ENCODE measurements at regions of chr2 and their contacts with region 1.

Region 1: GRCh38 chr2:195656859-195657633 is at the start of gene SLC39A10:
- DNase-seq: peak; percentile 95
- ATAC-seq: peak; percentile 93
- H3K4me3 ChIP-seq: peak within 1 kb of the TSS; percentile 66 to 80
- H3K27ac ChIP-seq: peak within 1 kb of the TSS; percentile 87
- H3K4me1 ChIP-seq: peaks cover 11 to 17% of the 10 kb centered on the region in 2 experiments; a peak in 3 of 4 replicates
- H3K27me3 ChIP-seq: no peaks in the 10 kb centered on the region
- CTCF ChIP-seq: no peak
- POLR2A ChIP-seq: peak; percentile 87
- RAD21 ChIP-seq: no peak
- total RNA-seq, gene SLC39A10: 59.0 TPM

Region 2: GRCh38 chr2:195410074-195410671 is 246.9 kb before region 1 on chr2:
- CTCF ChIA-PET with region 1: interaction called, 3 read pairs
- POLR2A ChIA-PET with region 1: no interaction called
- RAD21 ChIA-PET with region 1: no interaction called
- intact Hi-C with region 1: loop called (anchors 5 kb)
- DNase-seq: no peak
- ATAC-seq: no peak
- H3K4me3 ChIP-seq: no peak overlapping the region
- H3K27ac ChIP-seq: no peak overlapping the region
- H3K4me1 ChIP-seq: no peaks in the 10 kb centered on the region
- H3K27me3 ChIP-seq: no peaks in the 10 kb centered on the region
- CTCF ChIP-seq: no peak
- POLR2A ChIP-seq: no peak
- RAD21 ChIP-seq: no peak

Region 3: DNA sequence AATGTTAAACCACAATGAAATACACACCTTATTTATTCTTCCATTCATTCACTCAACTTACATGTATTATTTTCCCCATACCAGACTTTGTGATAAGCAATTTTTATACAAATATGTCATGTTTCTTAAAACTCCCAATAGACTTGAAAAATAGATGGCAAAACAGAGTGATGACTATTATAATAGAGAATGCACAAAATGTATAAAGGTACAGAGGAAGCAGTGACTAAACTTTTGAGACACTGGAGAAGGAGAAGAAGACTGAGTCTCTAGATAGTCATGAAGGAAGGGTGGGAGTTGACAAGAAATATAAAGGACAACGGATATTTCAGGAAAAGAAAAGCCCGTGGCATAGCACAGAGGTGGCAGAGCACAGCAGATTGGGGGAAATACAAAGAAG is 198.1 kb before region 1 on chr2:
- CTCF ChIA-PET with region 1: no interaction called
- POLR2A ChIA-PET with region 1: no interaction called
- RAD21 ChIA-PET with region 1: no interaction called
- intact Hi-C with region 1: no loop called
- DNase-seq: no peak
- ATAC-seq: no peak
- H3K4me3 ChIP-seq: no peak overlapping the region
- H3K27ac ChIP-seq: no peak overlapping the region
- H3K4me1 ChIP-seq: no peaks in the 10 kb centered on the region
- H3K27me3 ChIP-seq: no peaks in the 10 kb centered on the region
- CTCF ChIP-seq: no peak
- POLR2A ChIP-seq: no peak
- RAD21 ChIP-seq: no peak

Region 4: DNA sequence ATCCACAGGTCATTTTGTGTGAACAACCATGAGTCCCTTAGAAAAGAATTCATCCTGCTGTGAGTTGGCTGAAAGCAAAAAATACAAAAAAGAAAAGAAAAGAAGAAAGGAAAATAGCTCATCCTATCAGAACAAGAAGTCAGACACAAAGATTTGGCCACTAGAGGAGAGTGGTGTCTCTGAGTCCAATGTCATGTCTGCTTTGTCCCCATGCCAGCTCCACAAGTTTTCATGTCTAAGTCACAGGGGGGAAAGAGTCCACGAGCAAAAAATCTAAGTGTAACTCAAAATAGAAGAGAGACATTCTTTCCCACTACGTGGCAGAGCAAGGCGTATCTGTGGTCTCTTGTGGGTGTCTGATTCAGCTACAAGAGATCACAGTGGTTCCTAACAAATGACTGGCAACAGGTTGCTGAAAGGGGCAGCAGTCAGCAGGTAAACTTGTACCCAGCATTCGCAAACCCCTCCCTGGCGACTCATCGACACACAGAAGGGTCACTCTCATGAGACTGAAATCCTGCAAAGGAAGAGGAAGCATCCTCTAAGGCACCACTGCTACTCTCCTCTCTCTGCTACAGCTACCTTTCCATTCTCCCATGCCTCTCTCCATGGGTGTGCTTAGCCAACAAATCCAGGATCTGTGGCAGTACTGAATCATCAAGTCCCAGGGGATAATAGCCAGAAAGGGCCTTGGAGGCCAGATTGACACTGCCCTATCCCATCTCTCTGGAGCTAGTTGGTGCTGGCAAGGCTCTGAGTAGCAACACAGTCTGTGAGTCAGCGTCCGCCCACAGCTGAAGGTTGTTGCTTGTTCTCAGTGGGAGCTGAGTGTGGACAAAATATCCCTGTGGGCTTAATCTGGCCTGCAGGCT is 123.0 kb before region 1 on chr2:
- CTCF ChIA-PET with region 1: interaction called, 4 read pairs
- POLR2A ChIA-PET with region 1: interaction called, 10 read pairs
- RAD21 ChIA-PET with region 1: no interaction called
- intact Hi-C with region 1: no loop called
- DNase-seq: peak; percentile 61
- ATAC-seq: peak; percentile 85
- H3K4me3 ChIP-seq: peak overlapping the region in 1 of 2 experiments; percentile 29; a peak in 2 of 4 replicates
- H3K27ac ChIP-seq: peak overlapping the region; percentile 37; the same call in 1 of the 2 replicates
- H3K4me1 ChIP-seq: peaks cover 12 to 20% of the 10 kb centered on the region in 2 experiments
- H3K27me3 ChIP-seq: no peaks in the 10 kb centered on the region
- CTCF ChIP-seq: peak in 1 of 3 experiments; percentile 14; a peak in 3 of 6 replicates
- POLR2A ChIP-seq: no peak
- RAD21 ChIP-seq: peak; percentile 29; the same call in 1 of the 2 replicates

Region 5: DNA sequence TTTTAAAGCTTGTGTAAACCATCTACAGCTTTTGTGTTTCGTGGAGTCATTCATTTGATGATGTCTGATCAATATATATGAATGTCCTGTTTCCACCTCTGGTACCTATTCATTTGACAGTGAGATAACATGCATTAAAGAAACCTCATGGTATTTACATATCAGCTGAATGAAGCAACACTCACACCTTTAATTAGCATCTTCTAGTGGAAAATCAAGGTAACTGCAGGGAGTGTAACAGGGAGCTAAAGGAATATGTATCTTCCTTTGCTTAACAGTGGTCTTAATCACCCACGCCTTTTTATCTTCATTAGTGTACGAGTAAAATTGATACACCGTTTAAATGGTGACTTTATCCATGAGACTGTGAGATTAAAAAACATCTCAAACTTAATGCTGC is 15.6 kb after region 1 on chr2:
- CTCF ChIA-PET with region 1: interaction called, 13 read pairs
- POLR2A ChIA-PET with region 1: interaction called, 12 read pairs
- RAD21 ChIA-PET with region 1: no interaction called
- intact Hi-C with region 1: no loop called
- DNase-seq: no peak
- ATAC-seq: peak; percentile 70
- H3K4me3 ChIP-seq: no peak overlapping the region
- H3K27ac ChIP-seq: no peak overlapping the region
- H3K4me1 ChIP-seq: peaks cover 0 to 10% of the 10 kb centered on the region in 2 experiments; a peak in 1 of 4 replicates
- H3K27me3 ChIP-seq: no peaks in the 10 kb centered on the region
- CTCF ChIP-seq: peak; percentile 15 to 47 (median 39); a peak in 5 of 6 replicates
- POLR2A ChIP-seq: no peak
- RAD21 ChIP-seq: peak; percentile 16; the same call in 1 of the 2 replicates

Measured in HCT116 (cell line).